Dendritic cell treated with granulocyte-macrophage colony-stimulating factor and Interleukin-4, amounts not matched to agents 40 ng/mL and 50 ng/mL, for 4 days (primary cell): ENCODE measurements at regions of chr11 and their contacts with region 1.

Region 1: DNA sequence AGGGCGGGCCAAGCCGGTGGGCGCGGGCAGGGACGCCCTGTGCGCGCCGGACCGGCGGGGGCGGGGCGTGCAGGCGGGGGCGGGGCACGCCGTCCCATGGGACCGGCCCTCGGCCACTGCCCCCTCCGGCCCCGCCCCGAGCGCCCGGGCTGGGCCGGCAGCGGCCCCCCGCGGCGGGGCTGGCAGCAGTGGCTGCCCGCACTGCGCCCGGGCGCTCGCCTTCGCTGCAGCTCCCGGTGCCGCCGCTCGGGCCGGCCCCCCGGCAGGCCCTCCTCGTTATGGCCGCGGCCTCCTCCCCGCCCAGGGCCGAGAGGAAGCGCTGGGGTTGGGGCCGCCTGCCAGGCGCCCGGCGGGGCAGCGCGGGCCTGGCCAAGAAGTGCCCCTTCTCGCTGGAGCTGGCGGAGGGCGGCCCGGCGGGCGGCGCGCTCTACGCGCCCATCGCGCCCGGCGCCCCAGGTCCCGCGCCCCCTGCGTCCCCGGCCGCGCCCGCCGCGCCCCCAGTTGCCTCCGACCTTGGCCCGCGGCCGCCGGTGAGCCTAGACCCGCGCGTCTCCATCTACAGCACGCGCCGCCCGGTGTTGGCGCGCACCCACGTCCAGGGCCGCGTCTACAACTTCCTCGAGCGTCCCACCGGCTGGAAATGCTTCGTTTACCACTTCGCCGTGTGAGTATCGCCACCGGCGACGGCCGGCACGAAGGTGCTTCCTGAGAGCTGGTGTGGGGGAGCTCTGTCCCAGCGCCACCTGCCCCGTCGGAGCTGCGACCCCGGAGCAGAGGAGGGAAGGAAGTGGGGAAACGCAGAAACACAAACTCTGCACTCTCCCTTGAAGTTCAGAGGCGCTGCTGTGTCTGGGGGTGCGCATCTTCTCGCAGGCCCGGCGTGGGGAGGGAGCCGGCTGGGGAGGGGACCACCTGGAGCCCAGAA is at the start of gene KCNQ1:
- H3K4me3 Mint-ChIP-seq: peak within 1 kb of the TSS; percentile 93
- H3K27ac Mint-ChIP-seq: peak within 1 kb of the TSS; percentile 86
- H3K4me1 Mint-ChIP-seq: peaks cover 61% of the 10 kb centered on the region
- H3K27me3 Mint-ChIP-seq: peaks cover 22% of the 10 kb centered on the region

Region 2: DNA sequence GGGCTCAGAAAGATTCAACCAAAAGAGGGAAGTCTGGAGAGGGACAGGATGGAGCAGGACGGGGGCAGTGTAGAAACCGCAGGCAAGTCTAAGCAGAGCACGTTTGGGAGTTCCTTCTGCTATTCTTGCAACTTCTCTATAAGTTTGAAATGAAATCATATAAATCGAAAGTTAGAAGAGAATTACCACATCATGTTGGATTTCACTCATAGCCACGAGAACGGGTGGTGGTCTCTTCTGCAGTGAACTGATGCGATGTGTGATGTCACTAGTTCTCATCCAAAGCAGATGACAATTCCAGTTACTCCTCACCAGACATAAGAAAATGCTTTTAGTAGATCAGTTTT is 35.8 kb after region 1 on chr11:
- intact Hi-C with region 1: loop called (anchors 5 kb)
- H3K4me3 Mint-ChIP-seq: peak overlapping the region; percentile 65
- H3K27ac Mint-ChIP-seq: peak overlapping the region; percentile 87
- H3K4me1 Mint-ChIP-seq: peaks cover 71% of the 10 kb centered on the region
- H3K27me3 Mint-ChIP-seq: no peaks in the 10 kb centered on the region

Region 3: DNA sequence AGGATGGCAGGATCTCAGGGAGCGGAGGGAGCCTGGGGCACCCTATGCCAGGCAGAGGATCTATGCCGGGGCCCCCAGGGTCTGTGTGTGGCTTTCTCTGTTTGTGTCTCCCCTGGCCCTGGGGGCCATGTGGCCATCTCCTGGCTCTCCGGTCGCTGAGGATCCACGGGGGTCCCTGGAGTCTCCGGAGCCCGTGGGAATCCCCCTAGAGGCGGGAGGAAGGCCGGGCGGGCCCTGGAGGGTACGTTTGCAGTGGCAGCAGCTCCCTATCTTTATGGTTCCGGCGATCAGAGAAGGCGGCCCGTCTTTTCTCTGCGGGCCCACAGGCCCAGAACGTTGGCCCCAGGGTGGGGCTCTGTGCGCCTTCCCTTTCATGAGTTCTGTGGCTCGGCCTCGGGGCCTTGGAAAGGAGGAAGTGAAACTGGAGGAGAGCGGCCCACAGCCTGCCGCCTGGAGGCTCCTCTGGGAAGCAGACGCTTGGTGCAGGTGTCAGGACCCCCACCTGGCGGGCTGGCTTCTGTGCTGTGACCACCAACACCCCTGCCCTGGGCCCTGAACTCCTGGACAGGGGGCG is 81.8 kb after region 1 on chr11:
- intact Hi-C with region 1: loop called (anchors 5 kb)
- H3K4me3 Mint-ChIP-seq: peak overlapping the region; percentile 71
- H3K27ac Mint-ChIP-seq: peak overlapping the region; percentile 92
- H3K4me1 Mint-ChIP-seq: peaks cover 68% of the 10 kb centered on the region
- H3K27me3 Mint-ChIP-seq: peaks cover 4% of the 10 kb centered on the region

Region 4: DNA sequence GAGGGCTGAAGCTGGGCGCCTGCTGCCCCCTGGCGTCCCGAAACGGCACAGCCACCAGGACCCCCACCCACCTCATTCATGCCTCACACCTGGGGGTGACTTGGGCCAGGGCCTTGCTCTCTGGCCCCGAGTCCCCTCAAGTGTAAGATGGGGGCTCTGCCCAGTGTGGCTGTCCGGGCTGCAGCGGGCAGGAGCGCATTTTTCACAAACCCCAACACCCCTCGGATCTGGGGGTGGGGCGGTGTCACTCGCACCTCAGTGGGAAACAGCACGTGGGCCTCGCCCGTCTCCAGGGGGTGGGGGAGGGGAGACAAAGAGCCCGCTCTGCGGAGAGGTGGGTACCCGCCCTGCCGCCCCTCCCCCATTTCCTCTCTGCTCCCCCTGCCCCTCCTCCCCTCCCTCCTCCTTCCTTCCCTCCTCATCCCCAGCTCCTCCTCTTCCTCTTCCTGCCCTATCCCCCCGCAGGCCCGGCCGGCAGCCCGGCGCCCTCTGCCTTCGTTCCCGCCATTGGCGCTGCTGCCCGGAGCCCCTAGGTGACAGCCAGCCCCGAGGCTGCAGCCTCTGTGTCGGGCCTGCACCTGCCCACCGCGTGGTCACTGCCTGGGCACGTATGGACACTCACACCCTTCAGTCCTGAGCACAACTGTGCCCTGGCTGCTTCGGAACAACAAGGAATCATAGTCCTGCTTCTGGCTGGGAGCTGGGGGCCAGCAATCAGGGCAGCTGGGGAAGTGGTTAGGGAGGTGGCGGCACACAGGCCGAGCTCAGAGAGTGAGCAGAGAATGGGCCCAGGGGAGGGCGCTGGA is 447.3 kb after region 1 on chr11:
- intact Hi-C with region 1: loop called (anchors 5 kb)
- H3K4me3 Mint-ChIP-seq: peak overlapping the region; percentile 63
- H3K27ac Mint-ChIP-seq: peak overlapping the region; percentile 46
- H3K4me1 Mint-ChIP-seq: peaks cover 37% of the 10 kb centered on the region
- H3K27me3 Mint-ChIP-seq: peaks cover 44% of the 10 kb centered on the region